Activated CD4-positive, alpha-beta memory T cell treated with anti-CD3 and anti-CD28 coated beads for 36 hours (primary cell): ENCODE measurements at regions of chr12 and their contacts with region 1.

Region 1: GRCh38 chr12:56751712-56752598 is at the start of gene PRIM1:
- DNase-seq: peak; percentile 94
- H3K4me3 Mint-ChIP-seq: peak within 1 kb of the TSS; percentile 99
- H3K27ac Mint-ChIP-seq: peak within 1 kb of the TSS; percentile 99
- H3K4me1 Mint-ChIP-seq: peaks cover 32% of the 10 kb centered on the region
- H3K27me3 Mint-ChIP-seq: no peaks in the 10 kb centered on the region
- total RNA-seq, gene PRIM1: 74.5 to 75.3 TPM

Region 2: GRCh38 chr12:56521590-56522371 is 230.2 kb before region 1 on chr12 and contains the start of gene RBMS2:
- CTCF ChIA-PET with region 1: no interaction called
- POLR2A ChIA-PET with region 1: no interaction called
- intact Hi-C with region 1: no loop called
- DNase-seq: peak; percentile 49
- H3K4me3 Mint-ChIP-seq: peak within 1 kb of the TSS; percentile 56
- H3K27ac Mint-ChIP-seq: no peak within 1 kb of the TSS
- H3K4me1 Mint-ChIP-seq: peaks cover 25% of the 10 kb centered on the region
- H3K27me3 Mint-ChIP-seq: peaks cover 1% of the 10 kb centered on the region
- total RNA-seq, gene RBMS2: 2.2 to 2.9 TPM

Region 3: DNA sequence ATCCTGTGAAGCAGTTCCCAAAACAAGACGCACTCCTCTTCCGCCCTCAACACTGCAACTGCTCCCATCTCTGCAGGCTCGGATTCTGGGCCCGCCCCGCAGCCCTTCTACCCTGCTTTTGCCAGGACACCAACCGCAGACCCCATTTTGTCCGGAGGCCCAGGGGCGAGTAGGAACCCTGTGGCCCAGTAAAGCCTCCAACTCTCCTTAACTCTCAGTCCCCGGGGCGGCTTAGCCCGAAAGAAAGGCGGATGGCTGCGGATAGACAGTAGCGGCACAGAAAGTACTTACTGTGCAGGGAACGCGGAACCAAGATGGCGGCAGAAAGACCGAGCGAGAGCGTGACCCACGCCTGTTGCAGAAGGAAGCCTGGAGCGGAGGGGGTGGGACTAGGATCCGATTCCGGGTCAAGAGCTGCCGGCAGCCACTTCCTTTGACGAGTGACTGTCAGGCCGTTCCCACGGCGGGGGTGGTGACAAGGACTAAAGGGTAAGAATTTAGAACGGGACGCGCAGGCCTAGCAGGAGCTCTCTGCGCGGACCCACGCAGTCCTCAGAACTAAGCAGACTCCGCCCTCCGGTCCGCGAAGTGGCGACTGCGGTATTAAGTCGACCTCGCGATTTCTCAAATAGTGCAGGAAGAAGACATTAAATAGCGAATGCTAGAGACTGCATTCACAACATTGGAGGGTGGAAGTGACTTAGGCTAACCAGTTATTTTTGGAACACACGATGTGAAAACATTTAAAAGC is 26.8 kb before region 1 on chr12 and contains the start of gene NACA:
- CTCF ChIA-PET with region 1: no interaction called
- POLR2A ChIA-PET with region 1: interaction called, 12 read pairs
- intact Hi-C with region 1: loop called (anchors 1 kb)
- DNase-seq: peak; percentile 99
- H3K4me3 Mint-ChIP-seq: peak within 1 kb of the TSS; percentile 96
- H3K27ac Mint-ChIP-seq: peak within 1 kb of the TSS; percentile 94
- H3K4me1 Mint-ChIP-seq: peaks cover 44% of the 10 kb centered on the region
- H3K27me3 Mint-ChIP-seq: no peaks in the 10 kb centered on the region
- total RNA-seq, gene NACA: 1,098 to 1,103 TPM

Region 4: DNA sequence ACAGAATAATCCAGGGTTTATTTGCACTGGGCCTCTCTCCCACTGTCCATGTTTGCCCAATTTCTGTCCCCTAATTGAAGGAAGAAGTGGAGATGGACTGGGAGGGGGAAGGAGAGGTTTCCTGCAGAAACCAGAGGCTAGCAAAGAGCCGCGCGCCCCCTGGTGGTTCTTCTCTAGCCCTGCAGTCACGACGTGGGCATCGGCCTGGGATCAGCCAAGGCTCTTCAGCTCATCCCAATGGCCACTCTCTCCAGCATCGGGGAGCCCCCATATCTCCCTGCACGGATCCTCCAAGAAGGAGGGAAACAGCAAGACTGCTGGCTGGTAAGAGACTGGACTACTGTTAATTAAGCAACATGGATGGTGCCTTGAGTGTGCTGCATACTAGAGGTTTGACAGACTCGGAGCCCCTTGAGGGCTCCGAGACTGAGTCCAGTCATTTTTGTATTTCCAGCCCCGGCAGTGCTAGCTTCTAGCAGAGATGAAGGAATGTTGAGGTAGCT is 235.6 kb after region 1 on chr12:
- CTCF ChIA-PET with region 1: interaction called, 80 read pairs
- POLR2A ChIA-PET with region 1: no interaction called
- intact Hi-C with region 1: loop called (anchors 1 kb)
- DNase-seq: peak; percentile 82
- H3K4me3 Mint-ChIP-seq: no peak overlapping the region
- H3K27ac Mint-ChIP-seq: no peak overlapping the region
- H3K4me1 Mint-ChIP-seq: peaks cover 9% of the 10 kb centered on the region
- H3K27me3 Mint-ChIP-seq: no peaks in the 10 kb centered on the region

Region 5: GRCh38 chr12:56998981-56999380 is 247.0 kb after region 1 on chr12:
- CTCF ChIA-PET with region 1: interaction called, 58 read pairs
- POLR2A ChIA-PET with region 1: interaction called, 3 read pairs
- intact Hi-C with region 1: loop called (anchors 1 kb)
- DNase-seq: peak; percentile 78
- H3K4me3 Mint-ChIP-seq: no peak overlapping the region
- H3K27ac Mint-ChIP-seq: peak overlapping the region; percentile 34
- H3K4me1 Mint-ChIP-seq: peaks cover 54% of the 10 kb centered on the region
- H3K27me3 Mint-ChIP-seq: no peaks in the 10 kb centered on the region

Region 6: GRCh38 chr12:57182921-57183790 is 431.2 kb after region 1 on chr12:
- CTCF ChIA-PET with region 1: interaction called, 5 read pairs
- POLR2A ChIA-PET with region 1: no interaction called
- intact Hi-C with region 1: loop called (anchors 5 kb)
- DNase-seq: peak; percentile 87
- H3K4me3 Mint-ChIP-seq: no peak overlapping the region
- H3K27ac Mint-ChIP-seq: no peak overlapping the region
- H3K4me1 Mint-ChIP-seq: no peaks in the 10 kb centered on the region
- H3K27me3 Mint-ChIP-seq: no peaks in the 10 kb centered on the region